ENCODE measurements at regions of chr10 and their contacts with region 1.

Region 1: DNA sequence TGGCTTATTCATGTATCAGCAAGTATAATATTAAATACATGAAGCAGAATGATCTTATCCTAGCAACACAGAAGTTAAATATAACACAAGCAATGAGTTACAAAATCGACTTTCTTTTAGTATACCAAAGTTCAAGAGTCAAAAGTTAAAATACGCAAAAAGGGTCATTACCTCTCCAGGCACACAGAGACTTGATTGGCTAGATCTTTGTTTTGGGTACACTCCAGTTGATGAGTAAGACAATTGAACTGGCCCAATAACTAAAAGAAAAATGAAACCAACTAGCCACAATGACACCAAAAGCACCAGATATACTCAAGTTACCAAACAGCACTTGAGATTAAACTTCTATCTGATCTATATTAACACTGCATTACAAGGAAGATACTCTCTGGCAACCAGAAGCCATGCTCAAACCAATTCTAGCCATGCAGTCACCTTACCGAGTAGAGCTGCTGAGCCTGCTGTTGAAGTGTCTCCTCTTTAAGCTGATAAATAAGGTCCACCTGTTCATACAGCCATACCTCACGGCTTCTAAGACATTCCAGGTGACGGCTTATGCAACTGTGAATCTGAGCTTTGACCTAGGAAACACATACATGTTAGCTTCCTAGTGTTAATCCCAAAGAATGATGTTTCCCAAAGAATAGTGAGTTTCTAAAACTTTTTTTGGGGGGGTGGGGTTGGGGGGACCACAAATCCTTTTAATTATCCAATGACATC is 15.6 kb downstream of the NCOA4 start:
- DNase-seq: no peak
- ATAC-seq: no peak
- H3K4me3 Mint-ChIP-seq: no peak overlapping the region
- H3K27ac Mint-ChIP-seq: peak overlapping the region; percentile 2
- H3K4me1 Mint-ChIP-seq: peaks cover 34% of the 10 kb centered on the region
- H3K27me3 Mint-ChIP-seq: no peaks in the 10 kb centered on the region

Region 2: DNA sequence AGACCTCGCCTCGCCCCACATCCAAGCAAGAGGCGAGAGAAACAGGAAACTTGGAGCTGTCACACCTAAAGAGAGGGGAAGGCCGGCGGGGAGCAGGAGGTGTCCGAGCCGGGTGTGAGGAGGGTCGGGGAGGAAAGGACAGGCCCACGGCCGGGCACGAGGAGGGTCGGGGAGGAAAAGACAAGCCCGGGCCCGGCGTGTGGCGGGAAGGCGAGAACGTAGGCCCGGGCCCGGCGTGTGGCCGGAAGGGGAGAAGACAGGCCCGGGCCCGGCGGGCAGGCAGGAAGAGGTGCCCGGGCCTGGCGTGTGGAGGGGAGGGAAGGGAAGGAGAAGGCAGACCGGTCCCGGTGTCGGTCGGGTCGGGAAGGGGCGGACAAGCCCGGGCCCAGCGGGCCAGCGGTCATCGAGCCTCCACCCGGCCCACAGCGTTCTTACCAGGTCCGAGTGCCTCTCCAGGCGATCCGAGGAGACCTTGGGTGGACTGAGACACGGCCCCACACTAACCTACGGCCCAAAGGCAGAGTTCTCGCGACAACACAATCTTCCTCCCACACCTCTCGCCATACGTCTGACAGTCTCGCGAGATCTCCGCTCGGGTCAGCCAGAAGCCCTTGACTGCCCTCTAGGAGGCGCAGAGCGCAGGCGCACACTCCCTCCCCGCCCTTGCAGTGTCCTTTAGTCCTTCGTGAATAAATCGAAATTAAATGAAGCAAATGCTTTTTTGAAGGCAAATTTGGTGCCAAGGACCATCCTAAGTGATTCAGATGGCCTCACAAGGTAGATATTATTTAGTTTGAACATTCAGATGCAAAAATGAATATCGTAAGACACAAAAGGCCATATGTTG is 15.5 kb after region 1 on chr10 and contains the start of gene NCOA4:
- CTCF ChIA-PET with region 1: interaction called, 10 read pairs
- DNase-seq: peak; percentile 98
- ATAC-seq: peak; percentile 96
- H3K4me3 Mint-ChIP-seq: peak within 1 kb of the TSS; percentile 98
- H3K27ac Mint-ChIP-seq: peak within 1 kb of the TSS; percentile 95
- H3K4me1 Mint-ChIP-seq: peaks cover 52% of the 10 kb centered on the region
- H3K27me3 Mint-ChIP-seq: peaks cover 3% of the 10 kb centered on the region
- total RNA-seq, gene NCOA4: 90.9 to 122 TPM